Endothelial cell of umbilical vein (primary cell): ENCODE measurements at regions of chr13 and their contacts with region 1.

Region 1: GRCh38 chr13:60369242-60369641 is 27.8 kb upstream of the TDRD3 start:
- DNase-seq: no peak
- H3K4me3 ChIP-seq: no peak overlapping the region
- H3K27ac ChIP-seq: no peak overlapping the region
- H3K4me1 ChIP-seq: no peaks in the 10 kb centered on the region
- H3K27me3 ChIP-seq: peaks cover 0 to 4% of the 10 kb centered on the region in 2 experiments
- CTCF ChIP-seq: peak in 1 of 2 donors; percentile 26
- POLR2A ChIP-seq: no peak

Region 2: DNA sequence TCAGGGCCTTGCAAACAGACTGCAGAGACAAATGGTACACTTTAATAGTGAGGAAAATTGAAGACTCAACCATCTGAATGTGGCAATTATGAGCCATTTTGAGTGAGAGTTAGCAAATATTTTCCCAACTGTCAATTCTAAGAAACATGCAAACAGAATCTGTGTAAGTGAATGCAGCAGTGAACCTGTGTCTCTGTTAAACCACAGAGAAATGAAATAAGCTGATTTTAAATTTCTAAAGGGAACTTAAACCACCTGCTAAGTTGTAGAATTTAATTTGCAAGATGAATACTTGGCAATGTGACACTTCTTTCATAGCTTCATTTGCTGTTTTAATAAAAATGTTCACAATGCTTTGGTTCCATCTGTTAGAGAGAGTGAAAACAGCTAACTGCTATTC is 14.2 kb before region 1 on chr13:
- CTCF ChIA-PET with region 1: interaction called, 10 read pairs
- POLR2A ChIA-PET with region 1: no interaction called
- dilution Hi-C with region 1: no loop called
- intact Hi-C with region 1: no loop called
- DNase-seq: no peak
- H3K4me3 ChIP-seq: no peak overlapping the region
- H3K27ac ChIP-seq: no peak overlapping the region
- H3K4me1 ChIP-seq: no peaks in the 10 kb centered on the region
- H3K27me3 ChIP-seq: peaks cover 2% of the 10 kb centered on the region in 2 experiments
- CTCF ChIP-seq: no peak
- POLR2A ChIP-seq: no peak

Region 3: DNA sequence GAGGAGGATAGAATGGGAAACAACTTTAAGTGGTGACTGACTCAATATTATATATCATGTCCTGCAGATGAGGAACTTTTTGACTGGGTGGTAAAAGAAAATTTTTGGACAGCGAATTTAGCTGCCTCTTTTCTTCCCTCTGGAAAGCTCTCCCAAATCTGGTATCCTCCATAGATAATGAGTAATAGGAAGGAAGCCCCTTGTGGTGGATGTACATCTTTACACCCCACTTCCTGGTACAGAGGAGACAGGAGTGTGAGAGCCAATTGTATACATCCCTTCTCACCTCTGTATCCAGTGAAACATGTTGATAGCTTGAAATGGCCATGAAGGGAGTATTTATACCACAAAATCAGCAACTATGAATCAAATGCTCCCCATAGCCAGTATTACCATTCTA is 10.6 kb after region 1 on chr13:
- CTCF ChIA-PET with region 1: interaction called, 14 read pairs
- POLR2A ChIA-PET with region 1: no interaction called
- dilution Hi-C with region 1: no loop called
- intact Hi-C with region 1: no loop called
- DNase-seq: no peak
- H3K4me3 ChIP-seq: no peak overlapping the region
- H3K27ac ChIP-seq: no peak overlapping the region
- H3K4me1 ChIP-seq: peaks cover 8% of the 10 kb centered on the region
- H3K27me3 ChIP-seq: no peaks in the 10 kb centered on the region
- CTCF ChIP-seq: no peak
- POLR2A ChIP-seq: no peak